ENCODE measurements at regions of chr10 and their contacts with region 1.

Region 1: DNA sequence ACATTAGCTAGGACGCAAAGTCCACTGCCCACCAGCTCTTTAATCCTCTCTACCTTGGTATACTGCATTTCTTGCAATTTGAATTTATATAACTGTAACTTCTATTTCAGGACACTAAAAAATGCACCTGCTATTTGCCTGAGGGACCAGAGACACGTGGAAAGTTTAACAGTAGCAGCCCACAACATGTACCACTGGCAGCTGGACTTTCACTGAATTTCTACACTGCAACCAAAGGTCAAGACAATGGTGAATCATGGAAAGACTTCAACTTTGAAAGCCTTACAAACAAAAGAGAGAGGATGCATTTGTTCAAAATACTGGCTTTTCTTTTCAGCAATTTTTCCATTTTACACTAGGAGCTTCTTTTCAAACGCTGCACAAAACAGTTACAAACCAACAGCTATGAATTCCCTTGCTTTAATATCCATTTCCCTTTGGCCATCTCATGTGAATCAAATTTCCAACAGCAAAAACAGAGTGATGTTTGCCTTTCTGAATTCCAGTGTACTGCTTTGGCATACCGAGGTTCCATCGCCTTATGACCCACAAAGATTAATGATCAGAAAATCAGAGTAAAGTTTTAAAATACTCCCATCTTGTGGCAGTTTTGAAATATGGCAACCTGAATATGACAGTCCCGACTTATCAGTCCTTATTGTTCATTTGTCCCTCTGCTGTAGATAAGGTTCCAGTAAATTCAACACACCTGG is 29.9 kb upstream of the HNRNPH3 start:
- DNase-seq: peak; percentile 34
- H3K4me3 ChIP-seq: no peak overlapping the region
- H3K27ac ChIP-seq: no peak overlapping the region
- H3K27me3 ChIP-seq: no peaks in the 10 kb centered on the region
- CTCF ChIP-seq: peak; percentile 69

Region 2: DNA sequence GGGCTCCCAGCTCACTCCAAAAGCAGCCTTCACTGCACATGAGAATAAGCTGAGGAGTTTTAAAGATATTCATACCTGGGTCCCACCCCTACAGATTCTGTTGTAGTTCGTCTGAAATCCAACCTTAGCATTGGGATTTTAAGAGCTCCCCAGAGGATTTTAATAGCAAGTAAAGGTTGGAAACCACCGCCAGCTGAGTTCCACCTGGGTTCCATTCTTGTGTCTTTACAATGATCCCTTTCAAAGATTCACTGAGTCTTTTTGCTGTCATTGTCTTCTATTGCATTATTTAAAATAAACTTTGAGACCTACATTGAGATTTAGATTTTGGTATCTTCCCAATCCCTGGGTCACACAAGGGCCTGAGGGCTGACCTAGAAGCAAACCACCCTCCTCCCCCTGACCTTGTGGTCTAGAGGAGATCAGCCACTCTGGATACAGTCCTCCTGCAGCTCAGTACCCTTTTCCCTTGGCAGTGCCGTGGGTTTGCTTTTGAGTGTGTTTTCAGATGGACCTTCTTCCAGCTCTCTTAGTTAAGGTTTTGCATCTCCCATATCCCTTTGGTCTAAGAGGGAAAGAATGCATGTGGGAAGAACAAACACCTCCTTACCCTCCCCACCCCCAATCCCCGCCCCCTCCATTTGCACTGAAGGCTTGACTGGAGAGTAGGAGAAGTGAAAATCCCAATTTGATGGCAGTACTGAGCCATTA is 440.0 kb before region 1 on chr10:
- CTCF ChIA-PET with region 1: interaction called, 13 read pairs
- POLR2A ChIA-PET with region 1: no interaction called
- DNase-seq: no peak
- H3K4me3 ChIP-seq: no peak overlapping the region
- H3K27ac ChIP-seq: no peak overlapping the region
- H3K27me3 ChIP-seq: no peaks in the 10 kb centered on the region
- CTCF ChIP-seq: no peak

Region 3: GRCh38 chr10:68082872-68083271 is 219.1 kb before region 1 on chr10:
- CTCF ChIA-PET with region 1: interaction called, 15 read pairs
- POLR2A ChIA-PET with region 1: no interaction called
- DNase-seq: no peak
- H3K4me3 ChIP-seq: no peak overlapping the region
- H3K27ac ChIP-seq: no peak overlapping the region
- H3K27me3 ChIP-seq: no peaks in the 10 kb centered on the region
- CTCF ChIP-seq: peak; percentile 62

Region 4: DNA sequence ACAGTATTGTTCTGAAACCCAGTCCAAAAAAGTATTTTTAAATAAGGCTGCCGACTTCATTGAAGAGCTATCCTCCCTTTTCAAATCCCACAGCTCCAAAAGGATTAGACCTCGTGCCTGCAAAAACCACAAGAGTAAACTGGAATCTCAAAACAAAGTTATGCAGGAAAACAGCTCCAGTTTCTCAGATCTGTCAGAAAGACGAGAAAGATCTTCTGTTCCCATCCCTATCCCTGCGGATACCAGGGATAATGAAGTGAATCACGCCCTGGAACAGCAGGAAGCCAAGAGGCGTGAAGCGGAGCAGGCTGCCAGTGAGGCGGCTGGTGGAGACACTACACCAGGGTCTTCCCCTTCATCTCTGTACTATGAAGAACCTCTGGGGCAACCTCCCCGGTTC is 180.1 kb before region 1 on chr10:
- CTCF ChIA-PET with region 1: no interaction called
- POLR2A ChIA-PET with region 1: no interaction called
- DNase-seq: no peak
- H3K4me3 ChIP-seq: no peak overlapping the region
- H3K27ac ChIP-seq: no peak overlapping the region
- H3K27me3 ChIP-seq: no peaks in the 10 kb centered on the region
- CTCF ChIP-seq: no peak

Region 5: DNA sequence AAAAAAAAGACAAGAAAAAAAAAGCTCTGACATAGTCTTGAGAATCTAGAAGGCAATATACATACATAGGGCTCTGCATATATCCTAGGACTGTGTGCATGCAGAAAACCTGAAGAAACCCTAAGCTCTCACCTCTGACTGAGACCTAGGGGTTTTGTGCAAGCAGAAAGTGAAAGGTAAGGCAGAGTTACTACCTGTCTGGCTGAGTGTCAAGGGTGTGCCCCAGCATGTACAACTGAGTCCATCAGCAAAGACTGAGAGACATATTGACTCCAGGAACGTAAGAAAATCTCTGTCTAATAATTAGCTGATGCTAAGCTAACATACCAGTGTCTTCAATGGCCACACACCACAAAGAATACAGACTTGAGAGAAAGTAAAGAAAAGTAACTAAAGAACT is 13.6 kb after region 1 on chr10:
- CTCF ChIA-PET with region 1: interaction called, 12 read pairs
- POLR2A ChIA-PET with region 1: no interaction called
- DNase-seq: no peak
- H3K4me3 ChIP-seq: no peak overlapping the region
- H3K27ac ChIP-seq: no peak overlapping the region
- H3K27me3 ChIP-seq: no peaks in the 10 kb centered on the region
- CTCF ChIP-seq: no peak

Measured in AG04450 (cell line).